ENCODE measurements at regions of chr3 and their contacts with region 1.

Region 1: DNA sequence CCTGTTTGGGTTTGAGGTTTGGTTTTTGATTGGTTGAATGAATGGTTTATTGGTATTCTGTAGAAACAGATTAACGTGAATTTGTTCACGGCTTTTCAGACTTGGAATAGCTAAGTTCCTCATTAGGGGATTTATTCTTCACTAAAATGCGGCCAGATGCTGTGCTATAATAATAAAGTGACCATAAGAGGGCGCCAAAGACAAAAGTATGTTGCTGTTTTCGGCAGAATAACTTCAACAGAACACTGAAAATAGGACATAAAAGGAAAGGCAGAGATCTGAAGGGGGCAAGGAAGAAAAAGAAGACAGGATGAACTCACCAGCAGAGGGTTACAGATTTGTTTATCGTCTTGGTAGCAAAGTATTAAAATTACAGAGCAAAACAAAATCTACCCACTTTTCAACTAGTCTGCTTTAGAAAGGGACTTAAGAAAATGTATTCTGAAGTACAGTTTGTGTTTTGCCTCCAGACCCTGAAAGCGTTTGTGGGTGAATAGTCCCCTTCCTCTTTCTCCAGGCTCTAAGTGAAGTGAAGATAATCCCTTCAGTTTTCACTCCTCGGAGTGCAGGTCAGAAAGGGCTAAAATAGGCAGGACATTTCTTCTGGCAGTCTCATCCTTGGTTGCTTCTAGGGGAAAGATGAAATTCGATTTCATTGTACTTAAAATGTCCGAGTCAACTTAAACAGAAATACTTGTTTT is 147.6 kb downstream of the IL20RB start:
- DNase-seq: peak; percentile 63
- H3K4me3 Mint-ChIP-seq: no peak overlapping the region
- H3K27ac Mint-ChIP-seq: no peak overlapping the region
- H3K4me1 Mint-ChIP-seq: no peaks in the 10 kb centered on the region
- H3K27me3 Mint-ChIP-seq: peaks cover 29% of the 10 kb centered on the region
- CTCF ChIP-seq: peak; percentile 71

Region 2: DNA sequence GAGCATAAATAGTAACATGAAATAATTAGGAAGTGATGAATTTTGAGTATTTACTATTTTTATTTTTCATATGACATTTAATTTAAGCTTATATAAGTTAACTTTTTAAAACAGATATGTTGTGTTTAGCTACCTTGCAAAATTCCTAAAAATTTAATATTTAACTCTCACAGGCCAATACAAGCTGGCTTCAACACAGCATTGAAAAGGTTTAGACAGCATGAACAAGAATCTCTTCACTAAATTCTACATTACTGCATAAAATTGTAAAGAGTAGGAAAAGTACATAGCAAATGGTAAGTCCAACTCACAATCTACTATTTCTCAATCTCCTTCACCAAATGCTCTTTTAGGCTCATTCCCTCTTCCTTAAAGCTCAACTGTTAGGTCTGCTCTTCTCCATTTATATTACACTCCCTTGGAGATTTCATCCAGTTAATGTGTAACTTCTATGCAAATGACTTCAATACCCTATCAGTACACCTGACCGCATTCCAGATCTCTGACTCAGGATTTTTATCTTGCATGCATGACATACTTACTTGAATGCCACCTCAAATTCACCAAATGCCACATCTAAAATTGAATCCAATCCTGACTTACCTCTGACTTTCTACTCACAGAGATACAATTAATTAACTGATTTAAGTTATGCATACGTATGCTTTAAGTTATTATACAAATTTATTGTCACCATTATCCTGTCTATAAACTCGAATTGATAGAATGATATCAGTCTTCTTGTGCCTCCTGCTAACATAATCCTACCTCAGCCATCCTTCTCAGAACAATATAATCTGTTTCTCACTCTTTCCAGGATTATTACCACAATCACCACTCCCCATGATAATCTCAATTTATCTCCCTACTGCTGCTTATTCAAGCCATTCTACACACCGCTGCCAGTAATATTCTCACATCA is 480.3 kb before region 1 on chr3:
- CTCF ChIA-PET with region 1: no interaction called
- intact Hi-C with region 1: no loop called
- DNase-seq: peak; percentile 84
- H3K4me3 Mint-ChIP-seq: peak overlapping the region; percentile 66
- H3K27ac Mint-ChIP-seq: peak overlapping the region; percentile 97
- H3K4me1 Mint-ChIP-seq: peaks cover 71% of the 10 kb centered on the region
- H3K27me3 Mint-ChIP-seq: no peaks in the 10 kb centered on the region
- CTCF ChIP-seq: no peak

Region 3: DNA sequence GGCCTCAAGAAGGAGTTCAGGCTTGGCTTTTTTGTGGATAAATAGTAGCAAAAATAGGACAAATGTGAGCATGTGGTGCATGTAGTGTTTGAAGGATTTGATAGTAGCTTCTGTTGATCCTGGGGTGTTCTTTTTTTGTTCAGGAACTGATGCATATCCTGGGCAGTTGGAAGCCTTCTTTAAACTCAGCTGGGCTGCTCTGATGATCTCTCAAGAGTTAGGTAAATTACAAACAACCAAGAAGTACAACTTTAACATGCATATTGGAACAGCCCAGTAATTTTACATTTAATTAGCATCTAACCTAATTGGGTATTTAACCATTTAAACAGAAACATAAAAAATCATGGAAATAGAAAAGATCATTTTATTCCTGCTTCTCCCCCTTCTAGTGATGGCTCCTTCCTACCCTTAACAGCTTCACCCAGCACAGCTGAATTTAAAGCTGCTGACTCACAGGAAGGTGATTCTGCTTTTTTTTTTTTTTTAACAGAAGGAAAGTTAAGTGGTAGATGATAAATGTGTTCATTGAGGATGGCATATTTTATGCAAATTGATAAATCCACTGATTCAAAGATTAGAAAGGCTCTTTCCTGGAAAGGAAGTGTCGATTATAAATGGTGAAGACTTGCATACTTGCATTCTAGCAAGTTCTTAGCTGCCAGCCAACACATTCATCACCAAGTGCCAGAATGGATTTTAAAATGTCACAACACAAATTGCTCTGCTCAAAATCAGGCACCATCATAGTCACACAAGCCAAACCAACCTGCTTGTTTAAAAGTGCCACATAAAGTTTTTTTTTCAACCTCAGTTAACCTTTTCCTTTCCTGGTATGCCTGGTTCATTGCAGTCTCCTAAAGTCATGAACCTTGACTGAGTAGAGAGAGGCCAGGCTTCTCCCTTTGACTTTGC is 266.5 kb before region 1 on chr3:
- CTCF ChIA-PET with region 1: no interaction called
- intact Hi-C with region 1: no loop called
- DNase-seq: no peak
- H3K4me3 Mint-ChIP-seq: no peak overlapping the region
- H3K27ac Mint-ChIP-seq: no peak overlapping the region
- H3K4me1 Mint-ChIP-seq: peaks cover 48% of the 10 kb centered on the region
- H3K27me3 Mint-ChIP-seq: no peaks in the 10 kb centered on the region
- CTCF ChIP-seq: no peak

Region 4: DNA sequence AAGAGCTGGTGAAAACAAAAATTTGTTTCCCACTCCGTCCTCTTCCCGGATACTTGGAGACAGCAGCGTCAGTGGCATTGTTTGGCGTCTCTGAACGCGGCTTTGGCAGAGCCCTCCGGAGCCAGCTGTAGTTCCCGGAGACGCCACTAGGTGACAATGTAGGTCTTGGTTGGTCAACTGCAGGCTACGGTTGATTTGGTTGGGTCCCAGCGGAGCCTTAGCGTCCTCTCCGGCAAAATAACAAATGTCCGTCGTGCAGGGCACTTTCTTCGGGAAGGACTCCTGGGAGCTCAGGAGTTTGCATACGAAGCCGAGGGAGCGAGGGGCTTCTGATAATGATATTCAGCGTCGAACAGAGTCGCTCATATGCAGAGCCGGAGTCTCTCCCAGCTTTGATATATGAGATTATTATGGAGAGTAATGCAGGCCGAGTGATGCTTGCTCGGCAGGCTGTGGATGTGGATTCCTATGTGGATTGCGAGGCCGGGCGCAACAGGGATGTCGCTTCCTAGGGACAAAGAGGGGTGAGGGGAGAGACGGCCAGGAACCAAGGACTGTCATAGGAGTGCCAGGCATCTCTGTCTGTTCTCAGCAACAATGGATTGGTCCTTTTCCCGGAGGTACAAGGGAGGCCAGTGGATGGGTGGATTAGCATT is 72.8 kb before region 1 on chr3:
- CTCF ChIA-PET with region 1: interaction called, 8 read pairs
- intact Hi-C with region 1: loop called (anchors 2 kb)
- DNase-seq: peak; percentile 98
- H3K4me3 Mint-ChIP-seq: peak overlapping the region; percentile 66
- H3K27ac Mint-ChIP-seq: no peak overlapping the region
- H3K4me1 Mint-ChIP-seq: peaks cover 17% of the 10 kb centered on the region
- H3K27me3 Mint-ChIP-seq: peaks cover 7% of the 10 kb centered on the region
- CTCF ChIP-seq: peak; percentile 99

Region 5: GRCh38 chr3:137709011-137709601 is 603.7 kb after region 1 on chr3:
- CTCF ChIA-PET with region 1: no interaction called
- intact Hi-C with region 1: loop called (anchors 5 kb)
- DNase-seq: peak; percentile 52
- H3K4me3 Mint-ChIP-seq: no peak overlapping the region
- H3K27ac Mint-ChIP-seq: no peak overlapping the region
- H3K4me1 Mint-ChIP-seq: no peaks in the 10 kb centered on the region
- H3K27me3 Mint-ChIP-seq: peaks cover 17% of the 10 kb centered on the region
- CTCF ChIP-seq: peak; percentile 47

Region 6: DNA sequence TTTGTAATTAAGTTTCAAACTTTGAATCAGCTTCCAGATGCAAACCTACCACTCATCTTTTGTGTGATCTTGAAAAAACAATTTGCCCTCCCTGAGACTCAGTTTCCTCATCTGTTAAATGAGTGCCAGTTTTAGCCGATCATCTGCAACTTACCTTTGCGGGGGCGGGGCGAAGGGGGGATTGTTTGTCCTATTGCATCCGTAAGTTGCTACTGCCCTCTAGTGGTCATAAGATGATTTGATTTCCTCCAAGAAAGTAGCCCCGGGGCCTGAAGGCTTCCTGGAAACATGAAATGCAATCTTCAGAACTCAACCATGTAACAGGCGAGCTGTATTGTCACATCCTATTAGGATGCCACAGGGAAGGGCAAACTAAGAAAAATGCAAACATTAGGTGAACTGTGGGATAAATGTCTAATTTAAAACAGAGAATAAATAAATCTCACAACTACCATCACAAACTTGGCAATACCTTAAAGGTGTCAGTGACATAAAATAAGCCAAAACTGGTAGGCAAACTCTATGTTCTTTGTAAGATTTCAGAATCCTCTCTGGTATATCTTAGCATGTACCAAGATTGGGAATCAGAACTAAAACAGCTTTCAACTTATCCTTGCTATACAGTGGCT is 841.0 kb after region 1 on chr3:
- CTCF ChIA-PET with region 1: interaction called, 3 read pairs
- intact Hi-C with region 1: loop called (anchors 1 kb)
- DNase-seq: peak; percentile 84
- H3K4me3 Mint-ChIP-seq: no peak overlapping the region
- H3K27ac Mint-ChIP-seq: no peak overlapping the region
- H3K4me1 Mint-ChIP-seq: peaks cover 7% of the 10 kb centered on the region
- H3K27me3 Mint-ChIP-seq: peaks cover 32% of the 10 kb centered on the region
- CTCF ChIP-seq: peak; percentile 89

Region 7: GRCh38 chr3:138051946-138052802 is 946.7 kb after region 1 on chr3:
- CTCF ChIA-PET with region 1: no interaction called
- intact Hi-C with region 1: loop called (anchors 1 kb)
- DNase-seq: peak; percentile 75
- H3K4me3 Mint-ChIP-seq: no peak overlapping the region
- H3K27ac Mint-ChIP-seq: no peak overlapping the region
- H3K4me1 Mint-ChIP-seq: no peaks in the 10 kb centered on the region
- H3K27me3 Mint-ChIP-seq: no peaks in the 10 kb centered on the region
- CTCF ChIP-seq: peak; percentile 80